ENCODE measurements at regions of chr14 and their contacts with region 1.

Region 1: DNA sequence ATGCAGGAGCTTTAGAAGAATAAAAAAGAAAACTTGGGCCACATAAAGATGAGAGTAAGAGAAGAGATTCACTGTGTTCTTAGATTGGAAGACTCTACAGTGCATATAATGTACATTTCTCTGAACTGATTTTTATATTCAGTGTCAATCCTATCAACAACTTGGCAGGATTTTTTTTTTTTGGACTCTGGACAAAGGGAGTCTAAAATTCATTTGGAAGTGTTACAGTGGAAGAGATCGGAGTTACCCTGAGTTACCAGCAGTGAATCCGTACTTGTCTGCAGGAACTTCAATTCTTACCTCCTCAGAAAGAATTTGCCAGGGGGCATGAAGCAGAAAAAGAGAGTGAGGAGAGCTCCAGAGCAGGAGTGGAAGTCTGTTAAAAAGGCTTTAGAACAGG is 24.0 kb downstream of the SERPINA11 start:
- DNase-seq: no peak
- ATAC-seq: no peak
- H3K4me3 ChIP-seq: no peak overlapping the region
- H3K27ac ChIP-seq: no peak overlapping the region
- H3K4me1 ChIP-seq: no peaks in the 10 kb centered on the region
- H3K27me3 ChIP-seq: no peaks in the 10 kb centered on the region; the same call in 1 of the 2 replicates
- CTCF ChIP-seq: no peak

Region 2: GRCh38 chr14:94203473-94204210 is 225.0 kb before region 1 on chr14:
- CTCF ChIA-PET with region 1: no interaction called
- POLR2A ChIA-PET with region 1: no interaction called
- in situ Hi-C with region 1: no loop called
- intact Hi-C with region 1: no loop called
- DNase-seq: no peak
- ATAC-seq: no peak
- H3K4me3 ChIP-seq: no peak overlapping the region
- H3K27ac ChIP-seq: no peak overlapping the region
- H3K4me1 ChIP-seq: no peaks in the 10 kb centered on the region
- H3K27me3 ChIP-seq: no peaks in the 10 kb centered on the region
- CTCF ChIP-seq: no peak

Region 3: GRCh38 chr14:94485944-94486841 is 57.6 kb after region 1 on chr14:
- CTCF ChIA-PET with region 1: interaction called, 11 read pairs
- POLR2A ChIA-PET with region 1: no interaction called
- in situ Hi-C with region 1: no loop called
- intact Hi-C with region 1: loop called (anchors 5 kb)
- DNase-seq: peak; percentile 18
- ATAC-seq: peak; percentile 90
- H3K4me3 ChIP-seq: peak overlapping the region in 1 of 2 experiments; percentile 29; a peak in 2 of 4 replicates
- H3K27ac ChIP-seq: no peak overlapping the region
- H3K4me1 ChIP-seq: no peaks in the 10 kb centered on the region
- H3K27me3 ChIP-seq: no peaks in the 10 kb centered on the region
- CTCF ChIP-seq: peak; percentile 97

Measured in Panc1 (cell line).